ENCODE measurements at regions of chr20 and their contacts with region 1.

Region 1: DNA sequence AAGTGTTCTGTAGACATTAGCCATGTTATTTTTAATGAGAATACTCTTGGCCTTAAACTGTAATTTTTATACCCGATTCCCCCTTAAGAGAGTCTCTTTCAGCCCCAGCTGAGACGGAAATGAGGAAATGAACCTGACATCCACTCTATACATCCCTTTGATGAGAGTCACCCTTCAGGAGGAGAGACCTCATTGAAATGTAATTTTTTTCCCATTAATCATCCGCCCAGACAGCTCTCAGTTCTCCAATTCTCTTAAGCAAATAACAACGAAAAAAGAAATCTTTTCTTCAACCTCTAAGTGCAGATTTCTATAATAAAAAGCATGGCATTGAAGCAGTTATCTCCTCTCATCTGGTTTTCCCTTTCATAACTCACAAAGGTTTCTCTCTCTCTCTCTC is 243.8 kb upstream of the PMEPA1 start:
- DNase-seq: peak; percentile 59
- ATAC-seq: 0 out of 2 replicates have a peak, but pooled peaks have one; percentile 22
- H3K4me3 ChIP-seq: no peak overlapping the region
- H3K27ac ChIP-seq: no peak overlapping the region
- H3K4me1 ChIP-seq: no peaks in the 10 kb centered on the region
- H3K27me3 ChIP-seq: no peaks in the 10 kb centered on the region
- CTCF ChIP-seq: no peak

Region 2: GRCh38 chr20:57966620-57967019 is 13.0 kb after region 1 on chr20:
- CTCF ChIA-PET with region 1: interaction called, 11 read pairs
- POLR2A ChIA-PET with region 1: no interaction called
- intact Hi-C with region 1: no loop called
- DNase-seq: no peak
- ATAC-seq: no peak
- H3K4me3 ChIP-seq: no peak overlapping the region
- H3K27ac ChIP-seq: no peak overlapping the region
- H3K4me1 ChIP-seq: no peaks in the 10 kb centered on the region
- H3K27me3 ChIP-seq: no peaks in the 10 kb centered on the region
- CTCF ChIP-seq: no peak

Measured in PC-3 (cell line).